GM12878 (cell line): ENCODE measurements at regions of chr18 and their contacts with region 1.

Region 1: GRCh38 chr18:63098018-63098981 is 221.3 kb downstream of the BCL2 start:
- DNase-seq: peak; percentile 77
- ATAC-seq: peak; percentile 79
- H3K4me3 ChIP-seq: peak overlapping the region; percentile 8; the same call in 1 of the 2 replicates
- H3K27ac ChIP-seq: peak overlapping the region; percentile 86
- H3K4me1 ChIP-seq: peaks cover 34% of the 10 kb centered on the region
- H3K27me3 ChIP-seq: no peaks in the 10 kb centered on the region
- CTCF ChIP-seq: no peak
- EP300 ChIP-seq: peak; percentile 65 to 83; a peak in 3 of 4 replicates
- POLR2A ChIP-seq: no peak
- RAD21 ChIP-seq: no peak

Region 2: GRCh38 chr18:63040788-63041410 is 57.4 kb before region 1 on chr18:
- CTCF ChIA-PET with region 1: interaction called, 3 read pairs
- POLR2A ChIA-PET with region 1: interaction called, 7 read pairs
- RAD21 ChIA-PET with region 1: interaction called, 3 read pairs
- SMC1A ChIA-PET with region 1: interaction called, 3 read pairs
- in situ Hi-C with region 1: no loop called
- intact Hi-C with region 1: loop called (anchors 2 kb)
- DNase-seq: peak; percentile 83
- ATAC-seq: peak; percentile 83
- H3K4me3 ChIP-seq: peak overlapping the region; percentile 19; the same call in 1 of the 2 replicates
- H3K27ac ChIP-seq: peak overlapping the region; percentile 84
- H3K4me1 ChIP-seq: peaks cover 36% of the 10 kb centered on the region
- H3K27me3 ChIP-seq: no peaks in the 10 kb centered on the region
- CTCF ChIP-seq: no peak
- EP300 ChIP-seq: peak; percentile 73 to 87
- POLR2A ChIP-seq: peak; percentile 22; the same call in 1 of the 2 replicates
- RAD21 ChIP-seq: no peak

Region 3: GRCh38 chr18:63074981-63075404 is 23.3 kb before region 1 on chr18:
- CTCF ChIA-PET with region 1: interaction called, 8 read pairs
- POLR2A ChIA-PET with region 1: interaction called, 3 read pairs
- RAD21 ChIA-PET with region 1: interaction called, 7 read pairs
- SMC1A ChIA-PET with region 1: interaction called, 43 read pairs
- in situ Hi-C with region 1: no loop called
- intact Hi-C with region 1: loop called (anchors 1 kb)
- DNase-seq: no peak
- ATAC-seq: peak; percentile 40
- H3K4me3 ChIP-seq: peak overlapping the region; percentile 45; the same call in 1 of the 2 replicates
- H3K27ac ChIP-seq: peak overlapping the region; percentile 60
- H3K4me1 ChIP-seq: peaks cover 17% of the 10 kb centered on the region
- H3K27me3 ChIP-seq: no peaks in the 10 kb centered on the region
- CTCF ChIP-seq: no peak
- EP300 ChIP-seq: no peak
- POLR2A ChIP-seq: peak; percentile 76
- RAD21 ChIP-seq: no peak

Region 4: DNA sequence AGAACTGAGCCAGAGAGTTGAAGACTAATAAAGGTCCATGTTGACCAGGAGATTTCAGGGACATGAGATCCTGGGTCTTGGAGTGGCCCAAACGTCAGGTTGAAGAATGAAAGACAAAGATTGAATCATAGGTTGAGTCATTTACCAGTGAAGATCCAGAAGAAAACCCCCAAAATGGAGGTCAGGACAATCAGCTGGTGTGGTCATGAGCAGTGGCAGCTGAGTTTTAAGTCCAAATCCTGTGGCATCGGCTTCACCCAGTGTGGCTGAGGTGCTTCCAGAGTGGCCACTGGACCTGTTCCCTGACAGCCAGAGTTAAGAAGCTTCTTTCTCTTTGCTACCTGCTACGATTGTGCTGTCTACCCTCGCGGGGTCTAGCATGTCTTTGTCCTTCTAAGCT is 12.7 kb before region 1 on chr18:
- CTCF ChIA-PET with region 1: interaction called, 7 read pairs
- POLR2A ChIA-PET with region 1: interaction called, 4 read pairs
- RAD21 ChIA-PET with region 1: no interaction called
- SMC1A ChIA-PET with region 1: interaction called, 43 read pairs
- in situ Hi-C with region 1: no loop called
- intact Hi-C with region 1: no loop called
- DNase-seq: no peak
- ATAC-seq: no peak
- H3K4me3 ChIP-seq: no peak overlapping the region
- H3K27ac ChIP-seq: no peak overlapping the region
- H3K4me1 ChIP-seq: no peaks in the 10 kb centered on the region
- H3K27me3 ChIP-seq: no peaks in the 10 kb centered on the region
- CTCF ChIP-seq: no peak
- EP300 ChIP-seq: no peak
- POLR2A ChIP-seq: no peak
- RAD21 ChIP-seq: no peak

Region 5: DNA sequence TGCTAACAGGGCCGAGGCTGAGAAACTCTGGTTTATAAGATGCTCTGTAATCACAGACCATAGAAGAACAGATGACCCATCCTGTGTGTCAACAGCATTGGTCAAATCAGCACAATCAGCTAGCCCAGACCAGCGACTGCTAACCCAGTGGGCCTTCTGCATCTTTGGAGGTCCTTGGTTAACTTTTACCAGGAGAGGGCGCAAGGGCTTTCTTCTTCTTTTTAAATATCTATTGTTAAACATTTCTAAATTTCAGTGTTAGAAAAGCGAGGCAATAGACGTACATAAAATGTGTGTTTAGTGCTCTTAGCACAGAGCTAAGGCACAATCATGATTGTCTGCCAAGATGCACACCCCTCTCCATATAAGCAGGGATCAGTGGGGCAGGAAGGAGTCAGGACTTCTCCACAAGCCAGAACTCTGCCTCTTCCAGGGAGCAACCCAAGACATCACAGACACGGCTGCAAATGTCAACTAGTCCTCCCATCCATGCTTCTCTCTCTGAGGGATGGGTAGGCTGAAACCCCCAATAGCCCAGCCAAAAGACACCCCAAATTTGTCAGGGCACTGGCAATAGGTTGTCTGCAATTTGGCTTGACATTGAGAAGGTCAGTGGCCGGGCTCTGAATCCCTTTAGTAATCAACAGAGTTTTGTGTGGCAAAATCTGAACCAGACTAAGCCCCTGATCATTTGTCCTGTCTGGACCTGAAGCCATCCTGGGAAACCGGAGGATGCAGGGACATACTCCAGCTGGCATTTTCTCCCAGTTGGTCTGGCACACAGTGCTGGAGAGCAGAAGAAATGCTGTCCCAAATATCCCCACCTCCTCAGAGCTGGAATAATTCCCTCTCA is 33.0 kb after region 1 on chr18:
- CTCF ChIA-PET with region 1: interaction called, 4 read pairs
- POLR2A ChIA-PET with region 1: no interaction called
- RAD21 ChIA-PET with region 1: interaction called, 5 read pairs
- SMC1A ChIA-PET with region 1: interaction called, 10 read pairs
- in situ Hi-C with region 1: no loop called
- intact Hi-C with region 1: no loop called
- DNase-seq: no peak
- ATAC-seq: peak; percentile 84
- H3K4me3 ChIP-seq: no peak overlapping the region
- H3K27ac ChIP-seq: peak overlapping the region; percentile 49
- H3K4me1 ChIP-seq: peaks cover 24% of the 10 kb centered on the region
- H3K27me3 ChIP-seq: no peaks in the 10 kb centered on the region
- CTCF ChIP-seq: peak; percentile 52 to 65 (median 59)
- EP300 ChIP-seq: no peak
- POLR2A ChIP-seq: no peak
- RAD21 ChIP-seq: peak; percentile 76

Region 6: DNA sequence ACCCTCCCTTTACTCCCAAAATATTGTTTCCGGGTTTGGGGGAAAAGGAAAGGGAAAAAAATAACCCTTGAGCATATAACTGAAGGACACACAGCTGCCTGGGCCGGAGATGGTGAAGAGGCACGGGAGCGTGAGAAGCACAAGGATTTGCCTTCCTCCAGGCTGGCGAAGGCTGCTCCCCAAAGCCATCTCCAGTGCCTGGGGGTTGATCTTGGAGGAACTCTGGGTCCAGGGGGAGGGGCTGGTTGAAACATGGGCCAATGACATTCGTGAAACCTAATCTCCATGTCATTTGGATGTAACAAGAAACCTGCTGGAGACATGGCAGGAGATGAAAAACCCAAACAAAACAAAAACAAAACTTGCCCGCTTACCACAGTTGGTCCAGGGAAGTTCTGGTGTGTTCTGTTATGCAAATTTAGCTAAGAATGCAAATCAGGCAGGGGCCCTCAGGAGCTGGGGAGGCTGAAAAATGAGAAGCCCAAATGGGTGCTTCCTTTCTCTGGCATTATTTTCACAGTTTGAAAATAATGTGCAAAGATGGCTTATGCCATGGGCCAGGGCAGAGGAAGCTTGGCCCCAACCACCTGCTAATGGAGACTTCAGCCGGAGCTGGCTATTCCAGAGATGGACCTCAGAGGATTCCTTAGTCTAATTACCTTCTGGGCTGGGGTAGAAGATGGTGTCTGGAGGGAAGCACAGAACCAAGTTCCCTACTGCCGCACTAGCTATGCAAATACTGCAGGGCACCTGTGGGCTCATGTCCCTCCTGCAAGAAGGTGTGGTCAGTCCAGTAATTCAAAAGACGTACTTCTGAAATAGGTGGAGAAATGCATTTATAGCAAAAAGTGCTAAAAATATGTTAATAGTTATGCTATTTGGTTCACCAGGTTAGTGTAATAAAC is 40.4 kb after region 1 on chr18:
- CTCF ChIA-PET with region 1: interaction called, 4 read pairs
- POLR2A ChIA-PET with region 1: no interaction called
- RAD21 ChIA-PET with region 1: interaction called, 5 read pairs
- SMC1A ChIA-PET with region 1: interaction called, 10 read pairs
- in situ Hi-C with region 1: no loop called
- intact Hi-C with region 1: no loop called
- DNase-seq: peak; percentile 94
- ATAC-seq: peak; percentile 58
- H3K4me3 ChIP-seq: peak overlapping the region; percentile 65
- H3K27ac ChIP-seq: peak overlapping the region; percentile 96
- H3K4me1 ChIP-seq: peaks cover 72% of the 10 kb centered on the region
- H3K27me3 ChIP-seq: no peaks in the 10 kb centered on the region
- CTCF ChIP-seq: no peak
- EP300 ChIP-seq: peak in 1 of 2 experiments; percentile 69; a peak in 1 of 4 replicates
- POLR2A ChIP-seq: peak; percentile 74
- RAD21 ChIP-seq: no peak